Tibial artery (tissue), 4 donors: ENCODE measurements at regions of chr2 and their contacts with region 1.

Region 1: DNA sequence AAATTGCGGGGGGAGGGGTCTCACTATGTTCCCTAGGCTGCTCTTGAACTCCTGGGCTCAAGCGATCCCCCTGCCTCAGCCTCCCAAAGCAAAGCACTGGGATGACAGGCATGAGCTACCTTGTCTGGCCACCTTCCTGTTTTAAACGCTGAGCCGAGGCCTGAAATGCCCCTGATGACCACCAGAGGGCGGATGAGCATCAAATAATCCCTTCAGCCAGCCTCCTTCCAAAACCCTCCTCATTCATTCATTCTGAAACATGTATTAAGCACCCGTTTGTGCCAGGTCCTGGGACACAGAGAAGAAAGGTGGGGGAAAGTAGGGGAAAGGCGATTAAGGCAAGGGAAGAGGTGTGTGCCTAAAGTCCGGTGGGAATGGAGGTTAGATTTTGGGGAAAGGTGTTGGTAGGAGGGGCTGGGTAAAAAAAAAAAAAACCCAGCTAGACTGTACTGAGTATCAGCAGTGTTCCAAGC is 30.7 kb upstream of the PTMA start:
- DNase-seq: peak; percentile 88 to 92
- H3K4me3 ChIP-seq: no peak overlapping the region
- H3K27ac ChIP-seq: no peak overlapping the region
- H3K4me1 ChIP-seq: peaks cover 0 to 40% (median 33%) of the 10 kb centered on the region in 4 donors
- H3K27me3 ChIP-seq: no peaks in the 10 kb centered on the region
- CTCF ChIP-seq: peak; percentile 84 to 99

Region 2: GRCh38 chr2:231648587-231649174 is 29.0 kb before region 1 on chr2:
- intact Hi-C with region 1: loop called (anchors 1 kb)
- DNase-seq: peak; percentile 63 to 85
- H3K4me3 ChIP-seq: no peak overlapping the region
- H3K27ac ChIP-seq: no peak overlapping the region
- H3K4me1 ChIP-seq: peaks cover 1 to 21% (median 14%) of the 10 kb centered on the region in 4 donors
- H3K27me3 ChIP-seq: no peaks in the 10 kb centered on the region
- CTCF ChIP-seq: peak; percentile 74 to 80

Region 3: DNA sequence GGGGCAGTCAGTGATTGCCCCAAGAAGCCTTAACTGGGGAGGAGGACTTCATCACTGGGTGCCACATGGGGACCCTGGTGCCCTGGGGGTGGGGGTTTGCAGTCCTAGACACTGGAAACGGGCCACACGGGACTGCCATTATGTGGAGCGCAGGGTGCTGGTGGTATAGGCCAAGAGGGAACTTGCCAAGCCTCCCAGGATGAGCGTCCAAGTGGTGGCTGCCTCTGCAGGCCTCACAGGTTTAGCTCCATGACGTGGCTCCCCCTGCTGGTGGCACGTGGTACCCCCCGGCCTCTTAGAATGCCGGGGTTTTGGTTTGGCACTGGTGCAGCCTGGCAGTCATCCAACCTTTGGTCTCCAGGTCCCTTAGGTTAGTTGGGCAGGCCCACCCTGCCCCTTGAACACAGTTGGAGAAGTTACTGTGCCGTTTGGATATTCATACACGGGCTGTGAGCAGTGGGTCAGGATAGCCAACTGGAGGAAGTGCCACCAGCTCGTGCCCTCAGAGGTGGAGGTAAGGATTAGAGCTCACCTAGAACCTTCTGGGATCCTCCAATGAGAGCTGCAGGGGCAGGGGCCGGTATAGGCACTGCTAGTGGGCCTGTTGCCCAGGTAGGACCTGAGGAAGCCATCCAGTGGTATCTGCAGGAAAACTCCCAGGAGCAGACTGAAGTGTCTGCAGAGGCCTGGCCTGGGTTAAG is 36.2 kb after region 1 on chr2:
- intact Hi-C with region 1: loop called (anchors 2 kb)
- DNase-seq: peak; percentile 88 to 93
- H3K4me3 ChIP-seq: no peak overlapping the region
- H3K27ac ChIP-seq: peak overlapping the region; percentile 51 to 71
- H3K4me1 ChIP-seq: peaks cover 0 to 58% (median 38%) of the 10 kb centered on the region in 4 donors
- H3K27me3 ChIP-seq: no peaks in the 10 kb centered on the region
- CTCF ChIP-seq: peak; percentile 91 to 94